ENCODE measurements at regions of chr4 and their contacts with region 1.

Region 1: GRCh38 chr4:147096667-147097604 is 151.3 kb upstream of the TTC29 start:
- DNase-seq: peak in 1 of 42 donors; percentile 26

Region 2: GRCh38 chr4:147019061-147019460 is 77.9 kb before region 1 on chr4:
- intact Hi-C with region 1: loop called (anchors 5 kb)
- DNase-seq: peak in 41 of 42 donors; percentile 6 to 85 (median 64)

Region 3: GRCh38 chr4:147151763-147152162 is 54.8 kb after region 1 on chr4:
- intact Hi-C with region 1: no loop called
- DNase-seq: no peak